ENCODE measurements at regions of chr2 and their contacts with region 1.

Region 1: GRCh38 chr2:10434886-10435819 is 13.0 kb downstream of the ODC1 start:
- DNase-seq: peak; percentile 34
- H3K4me3 ChIP-seq: no peak overlapping the region
- H3K27ac ChIP-seq: no peak overlapping the region
- H3K27me3 ChIP-seq: no peaks in the 10 kb centered on the region
- CTCF ChIP-seq: peak; percentile 97

Region 2: GRCh38 chr2:9975805-9976447 is 459.2 kb before region 1 on chr2:
- CTCF ChIA-PET with region 1: interaction called, 10 read pairs
- POLR2A ChIA-PET with region 1: no interaction called
- DNase-seq: peak; percentile 85
- H3K4me3 ChIP-seq: no peak overlapping the region
- H3K27ac ChIP-seq: peak overlapping the region; percentile 40
- H3K27me3 ChIP-seq: no peaks in the 10 kb centered on the region
- CTCF ChIP-seq: no peak

Region 3: GRCh38 chr2:10072656-10073480 is 362.3 kb before region 1 on chr2:
- CTCF ChIA-PET with region 1: interaction called, 158 read pairs
- POLR2A ChIA-PET with region 1: interaction called, 13 read pairs
- DNase-seq: peak; percentile 71
- H3K4me3 ChIP-seq: no peak overlapping the region
- H3K27ac ChIP-seq: no peak overlapping the region
- H3K27me3 ChIP-seq: peaks cover 39% of the 10 kb centered on the region
- CTCF ChIP-seq: peak; percentile 88

Region 4: DNA sequence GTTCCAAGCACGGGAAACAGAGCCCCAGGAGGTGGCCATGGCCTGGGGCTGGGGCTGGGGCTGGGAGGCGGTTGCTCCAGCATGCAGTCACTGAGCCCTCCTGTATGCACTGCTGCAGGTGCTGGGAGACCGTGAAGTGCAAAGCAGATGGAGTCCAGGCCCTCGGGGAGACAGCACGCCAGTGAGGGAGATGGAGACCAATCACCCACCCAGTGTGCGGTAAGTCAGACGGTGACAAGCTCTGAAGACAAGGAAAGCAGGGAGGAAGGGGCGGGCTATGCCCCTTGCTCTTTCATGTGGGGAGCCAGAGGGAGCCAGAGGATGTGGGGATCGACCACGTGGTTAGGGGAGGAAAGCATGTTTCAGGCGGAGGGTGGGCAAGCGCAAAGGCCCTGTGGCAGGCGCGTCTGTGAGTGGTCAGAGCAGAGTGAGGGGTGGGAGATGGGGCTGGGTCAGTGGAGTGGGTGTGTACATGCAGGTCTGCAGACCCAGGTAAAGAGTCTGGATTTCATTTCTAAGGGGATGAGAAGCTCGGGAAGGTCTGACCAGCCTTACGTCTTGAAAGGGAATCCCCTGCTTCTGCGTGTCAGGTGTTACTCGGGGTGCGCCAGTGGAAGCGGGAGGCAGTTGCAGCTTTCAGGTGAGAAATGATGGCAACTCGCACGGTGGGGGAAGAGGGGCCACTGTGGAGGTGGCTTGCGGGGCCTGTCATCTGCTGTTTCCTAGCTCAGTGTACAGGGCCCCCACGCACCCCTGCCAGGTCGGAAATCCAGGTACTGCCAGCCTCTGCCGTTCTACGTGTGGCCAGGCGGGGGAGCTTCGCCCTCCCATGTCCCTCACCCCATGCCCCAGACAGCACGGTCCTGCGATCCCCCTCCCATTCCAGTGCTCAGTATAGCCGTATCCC is 293.2 kb before region 1 on chr2:
- CTCF ChIA-PET with region 1: interaction called, 14 read pairs
- POLR2A ChIA-PET with region 1: no interaction called
- DNase-seq: no peak
- H3K4me3 ChIP-seq: no peak overlapping the region
- H3K27ac ChIP-seq: no peak overlapping the region
- H3K27me3 ChIP-seq: no peaks in the 10 kb centered on the region
- CTCF ChIP-seq: peak; percentile 44

Region 5: GRCh38 chr2:10331027-10331701 is 104.0 kb before region 1 on chr2:
- CTCF ChIA-PET with region 1: no interaction called
- POLR2A ChIA-PET with region 1: no interaction called
- DNase-seq: no peak
- H3K4me3 ChIP-seq: no peak overlapping the region
- H3K27ac ChIP-seq: no peak overlapping the region
- H3K27me3 ChIP-seq: no peaks in the 10 kb centered on the region
- CTCF ChIP-seq: no peak

Region 6: DNA sequence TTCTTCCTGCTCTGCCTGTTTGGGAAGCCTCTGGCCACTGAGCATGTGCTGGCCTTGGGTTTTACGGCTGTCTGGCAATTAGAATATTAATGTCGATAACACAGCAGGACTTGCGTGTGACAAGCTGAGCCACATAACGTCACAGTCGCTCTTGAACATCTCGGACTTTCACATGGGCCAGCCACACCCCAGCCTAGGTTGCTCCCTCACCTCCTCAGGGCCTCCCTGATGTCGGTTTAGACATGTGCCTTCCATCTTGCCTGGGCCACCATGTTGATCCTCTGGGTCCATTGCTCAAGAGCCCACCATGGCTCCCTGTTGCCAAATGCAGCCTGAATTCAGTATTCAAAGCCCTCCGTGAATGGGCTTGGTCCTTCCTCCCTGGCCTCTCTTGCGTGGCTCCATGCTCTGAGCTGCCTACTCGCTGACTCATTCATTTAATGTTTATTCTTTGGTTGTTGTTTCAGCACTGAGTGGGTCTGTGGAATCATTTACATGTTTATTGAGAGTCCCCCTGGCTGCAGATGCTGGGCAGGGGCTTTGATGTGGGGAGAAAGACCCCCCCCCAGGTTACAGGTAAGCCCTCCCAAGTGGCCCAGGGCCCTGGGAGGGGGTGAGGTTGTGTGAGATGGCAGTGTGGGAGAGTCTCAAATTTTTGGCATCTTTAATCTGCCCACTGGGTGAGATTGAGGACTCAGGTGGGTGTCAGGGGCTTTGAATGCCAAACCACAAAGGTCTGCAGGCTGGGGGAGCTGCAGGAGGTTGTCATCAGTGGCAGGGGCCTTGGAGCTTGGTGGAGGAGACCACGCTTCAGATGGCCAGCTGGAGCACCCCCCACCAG is 49.0 kb before region 1 on chr2:
- CTCF ChIA-PET with region 1: no interaction called
- POLR2A ChIA-PET with region 1: no interaction called
- DNase-seq: peak; percentile 34
- H3K4me3 ChIP-seq: no peak overlapping the region
- H3K27ac ChIP-seq: peak overlapping the region; percentile 21
- H3K27me3 ChIP-seq: no peaks in the 10 kb centered on the region
- CTCF ChIP-seq: peak; percentile 29

Region 7: GRCh38 chr2:10408649-10409579 is 26.2 kb before region 1 on chr2:
- CTCF ChIA-PET with region 1: interaction called, 26 read pairs
- POLR2A ChIA-PET with region 1: no interaction called
- DNase-seq: no peak
- H3K4me3 ChIP-seq: peak overlapping the region; percentile 17; the same call in 1 of the 2 replicates
- H3K27ac ChIP-seq: peak overlapping the region; percentile 21
- H3K27me3 ChIP-seq: no peaks in the 10 kb centered on the region
- CTCF ChIP-seq: peak; percentile 95

Region 8: GRCh38 chr2:10659898-10660568 is 224.9 kb after region 1 on chr2:
- CTCF ChIA-PET with region 1: interaction called, 12 read pairs
- POLR2A ChIA-PET with region 1: interaction called, 3 read pairs
- DNase-seq: peak; percentile 63
- H3K4me3 ChIP-seq: no peak overlapping the region
- H3K27ac ChIP-seq: no peak overlapping the region
- H3K27me3 ChIP-seq: no peaks in the 10 kb centered on the region
- CTCF ChIP-seq: peak; percentile 85